BJ (cell line): ENCODE measurements at regions of chr17 and their contacts with region 1.

Region 1: DNA sequence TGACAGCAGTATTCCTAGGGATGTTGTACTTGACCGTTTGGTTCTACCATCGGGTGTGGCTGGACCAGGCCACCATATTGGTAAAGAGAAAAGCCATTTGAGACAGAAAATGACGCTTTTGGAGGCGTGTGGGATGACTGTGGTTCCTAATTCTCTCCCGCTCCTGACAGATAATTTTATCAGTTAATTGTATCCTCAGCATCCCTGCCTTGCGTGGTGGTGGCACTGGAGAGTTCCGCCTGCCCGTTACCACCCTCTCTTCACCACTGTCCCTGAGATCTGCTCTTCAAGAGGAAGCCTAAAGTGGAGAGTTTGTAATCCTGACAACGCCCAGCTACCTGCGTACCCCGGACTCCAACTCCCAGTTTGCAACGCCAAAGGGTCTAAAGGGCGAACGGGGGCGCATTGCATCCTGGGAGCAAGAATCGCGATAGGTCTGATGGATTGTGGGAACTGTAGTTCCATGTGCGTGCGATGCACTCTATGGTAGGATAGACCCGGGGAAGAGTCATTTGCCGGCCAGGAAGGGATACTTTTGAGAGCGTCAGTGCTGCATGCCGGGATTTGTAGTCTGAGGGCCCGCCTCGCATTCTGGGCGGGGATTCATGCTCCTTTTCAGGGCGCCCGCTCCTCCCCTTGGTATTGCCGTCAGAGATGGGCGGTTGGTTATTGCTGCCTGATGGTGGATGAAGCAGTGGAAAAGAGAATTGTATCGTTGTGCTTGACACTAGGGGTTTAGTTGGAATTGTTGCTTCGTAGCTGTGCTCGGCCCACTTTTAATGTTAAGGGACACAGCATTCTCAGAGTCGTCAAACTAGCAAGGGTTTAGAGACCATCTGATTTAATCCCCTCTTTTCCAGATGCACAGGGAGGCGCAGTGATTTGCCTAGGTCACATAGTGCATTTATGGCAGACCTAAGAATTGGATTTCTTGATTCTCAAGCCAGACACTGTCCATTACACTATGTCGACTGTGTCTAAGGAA is 965 bp upstream of the PHF12 start:
- DNase-seq: peak; percentile 98
- H3K4me3 ChIP-seq: peak overlapping the region; percentile 49
- H3K27me3 ChIP-seq: no peaks in the 10 kb centered on the region
- CTCF ChIP-seq: no peak

Region 2: DNA sequence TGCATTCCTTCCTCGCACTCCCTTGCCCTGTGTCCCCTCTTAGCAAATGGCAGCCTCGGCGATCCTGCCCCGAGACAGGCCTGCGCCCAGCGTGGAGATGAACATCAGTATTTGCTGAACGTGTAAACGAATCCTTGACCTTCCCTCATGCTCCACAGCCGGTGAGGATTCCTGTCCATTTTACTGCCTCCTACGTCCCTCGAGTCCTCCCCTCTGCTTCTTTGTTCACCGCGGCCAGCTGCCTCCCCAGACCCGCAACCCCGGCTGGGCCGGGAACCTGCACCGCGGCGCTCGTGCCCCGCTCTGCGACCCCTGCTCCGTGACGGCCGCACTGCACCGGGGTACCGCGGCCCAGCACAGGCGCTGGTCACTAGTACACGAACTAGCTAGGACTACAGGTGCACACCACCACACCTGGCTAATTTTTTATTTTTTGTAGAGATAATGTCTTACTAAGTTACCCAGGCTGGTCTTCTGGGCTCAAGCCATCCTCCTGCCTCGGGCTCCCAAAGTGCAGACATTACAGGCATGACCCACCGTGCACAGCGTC is 634.0 kb before region 1 on chr17:
- CTCF ChIA-PET with region 1: no interaction called
- POLR2A ChIA-PET with region 1: no interaction called
- DNase-seq: no peak
- H3K4me3 ChIP-seq: peak overlapping the region; percentile 62
- H3K27me3 ChIP-seq: no peaks in the 10 kb centered on the region
- CTCF ChIP-seq: no peak

Region 3: DNA sequence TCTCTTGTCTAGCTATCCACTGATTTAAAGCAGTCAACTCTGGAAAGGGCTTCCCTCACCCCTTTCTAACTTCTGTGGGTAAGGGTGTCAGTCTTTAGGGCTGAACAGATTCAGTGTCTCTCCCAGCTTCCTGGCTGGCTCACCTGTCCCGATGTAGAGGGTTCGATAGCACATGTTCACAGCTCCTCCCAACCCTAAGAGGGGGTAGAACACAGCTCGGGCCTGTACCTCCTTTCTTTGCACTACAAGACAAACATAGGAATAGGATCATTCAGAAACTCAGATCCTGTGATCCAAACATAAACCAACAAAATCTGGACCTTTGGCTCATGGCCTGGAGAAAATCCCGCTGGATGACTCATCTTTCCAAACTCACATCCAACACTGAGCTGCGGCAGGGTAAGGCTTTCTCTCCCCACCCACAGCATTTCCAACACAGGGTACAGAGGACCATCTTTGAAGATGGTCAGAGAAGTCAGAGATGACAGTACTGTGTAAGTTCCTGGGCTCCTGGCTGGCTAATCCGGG is 43.6 kb before region 1 on chr17:
- CTCF ChIA-PET with region 1: interaction called, 15 read pairs
- POLR2A ChIA-PET with region 1: no interaction called
- DNase-seq: peak; percentile 40
- H3K4me3 ChIP-seq: no peak overlapping the region
- H3K27me3 ChIP-seq: no peaks in the 10 kb centered on the region
- CTCF ChIP-seq: no peak

Region 4: GRCh38 chr17:28973425-28973824 is 21.1 kb after region 1 on chr17:
- CTCF ChIA-PET with region 1: interaction called, 23 read pairs
- POLR2A ChIA-PET with region 1: no interaction called
- DNase-seq: no peak
- H3K4me3 ChIP-seq: no peak overlapping the region
- H3K27me3 ChIP-seq: peaks cover 27% of the 10 kb centered on the region
- CTCF ChIP-seq: peak; percentile 31; the same call in 1 of the 2 replicates

Region 5: GRCh38 chr17:29116804-29117772 is 164.8 kb after region 1 on chr17:
- CTCF ChIA-PET with region 1: interaction called, 432 read pairs
- POLR2A ChIA-PET with region 1: no interaction called
- DNase-seq: no peak
- H3K4me3 ChIP-seq: no peak overlapping the region
- H3K27me3 ChIP-seq: no peaks in the 10 kb centered on the region
- CTCF ChIP-seq: peak; percentile 94